Transverse colon (tissue), 4 donors: ENCODE measurements at regions of chr6 and their contacts with region 1.

Region 1: GRCh38 chr6:157806131-157806855 is 16.8 kb upstream of the SNX9 start:
- DNase-seq: no peak
- H3K4me3 ChIP-seq: no peak overlapping the region
- H3K27ac ChIP-seq: no peak overlapping the region
- H3K4me1 ChIP-seq: no peaks in the 10 kb centered on the region
- H3K27me3 ChIP-seq: no peaks in the 10 kb centered on the region
- CTCF ChIP-seq: no peak
- EP300 ChIP-seq: no peak
- POLR2A ChIP-seq: no peak

Region 2: GRCh38 chr6:157753291-157753690 is 53.0 kb before region 1 on chr6:
- in situ Hi-C with region 1: no loop called
- intact Hi-C with region 1: no loop called
- DNase-seq: no peak
- H3K4me3 ChIP-seq: no peak overlapping the region
- H3K27ac ChIP-seq: no peak overlapping the region
- H3K4me1 ChIP-seq: peaks cover 8 to 13% (median 9%) of the 10 kb centered on the region in 4 donors
- H3K27me3 ChIP-seq: no peaks in the 10 kb centered on the region
- CTCF ChIP-seq: no peak
- EP300 ChIP-seq: no peak
- POLR2A ChIP-seq: no peak

Region 3: GRCh38 chr6:157859775-157860504 is 53.6 kb after region 1 on chr6:
- in situ Hi-C with region 1: no loop called
- intact Hi-C with region 1: loop called (anchors 2 kb)
- DNase-seq: no peak
- H3K4me3 ChIP-seq: no peak overlapping the region
- H3K27ac ChIP-seq: no peak overlapping the region
- H3K4me1 ChIP-seq: peaks cover 2 to 37% (median 30%) of the 10 kb centered on the region in 4 donors
- H3K27me3 ChIP-seq: no peaks in the 10 kb centered on the region
- CTCF ChIP-seq: no peak
- EP300 ChIP-seq: no peak
- POLR2A ChIP-seq: no peak